ENCODE measurements at regions of chr9 and their contacts with region 1.

Region 1: DNA sequence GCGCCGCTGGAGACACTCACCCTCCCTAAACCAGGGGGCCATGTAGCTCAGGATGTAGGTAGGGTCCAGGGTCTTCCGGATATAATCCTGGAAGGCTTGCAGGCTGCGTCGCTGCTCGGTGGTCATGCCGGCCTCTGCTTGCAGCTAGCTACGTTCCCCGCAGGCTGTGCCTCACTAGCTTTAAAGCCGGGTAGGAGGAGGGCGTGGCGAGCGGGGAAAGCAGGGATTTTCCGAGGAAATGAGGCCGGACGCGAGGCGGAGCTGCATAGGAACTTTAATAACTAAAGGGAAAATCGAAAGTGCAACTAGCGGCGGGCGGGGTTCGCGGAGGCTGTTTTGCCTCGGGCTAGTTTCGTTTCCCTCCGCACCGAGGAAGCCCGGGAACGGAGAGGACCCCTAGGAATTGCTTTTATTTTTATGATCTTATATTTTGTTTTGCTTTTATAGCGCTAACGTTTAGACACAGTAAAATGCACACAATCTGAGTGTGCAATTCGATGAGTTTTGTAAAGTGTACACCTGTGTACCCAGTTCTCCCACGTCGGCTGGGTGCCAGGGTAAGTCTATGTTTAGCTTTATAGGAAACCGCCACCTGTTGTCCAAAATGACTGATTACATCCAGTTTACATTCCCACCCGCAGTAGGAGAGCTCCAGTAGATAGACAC is at the start of gene RIGI:
- DNase-seq: peak; percentile 74 to 88 (median 85)
- H3K4me3 ChIP-seq: peak within 1 kb of the TSS; percentile 51 to 95 (median 78)
- H3K27ac ChIP-seq: peak within 1 kb of the TSS; percentile 29 to 95 (median 87)
- H3K27me3 ChIP-seq: no peaks in the 10 kb centered on the region
- CTCF ChIP-seq: peak in 53 of 56 donors; percentile 7 to 73 (median 45)
- total RNA-seq, gene RIGI: 4.1 to 28.6 (median 7.2) TPM

Region 2: DNA sequence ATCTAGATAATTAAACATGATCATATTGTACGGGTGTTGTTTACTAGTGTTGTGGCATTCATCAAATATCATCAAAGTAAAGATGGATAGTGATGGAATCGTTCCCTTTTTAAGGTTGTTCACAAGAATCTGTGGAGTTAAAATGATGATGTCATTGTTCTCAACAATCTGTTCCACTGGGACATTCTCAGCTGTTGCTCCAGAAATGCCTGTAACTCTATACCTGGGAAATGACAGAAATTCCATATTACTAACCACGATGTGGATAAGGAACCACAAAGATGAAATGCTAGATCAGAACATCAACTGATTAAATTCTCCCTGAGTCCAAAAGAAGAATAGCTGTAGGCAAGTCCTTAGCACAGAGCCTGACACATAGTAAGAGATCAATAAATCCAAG is 38.2 kb before region 1 on chr9:
- intact Hi-C with region 1: no loop called
- DNase-seq: no peak
- H3K4me3 ChIP-seq: no peak overlapping the region
- H3K27ac ChIP-seq: no peak overlapping the region
- H3K27me3 ChIP-seq: no peaks in the 10 kb centered on the region
- CTCF ChIP-seq: no peak

Region 3: GRCh38 chr9:32550562-32551433 is 24.6 kb after region 1 on chr9:
- intact Hi-C with region 1: loop called (anchors 2 kb)
- DNase-seq: peak; percentile 90 to 96 (median 94)
- H3K4me3 ChIP-seq: peak overlapping the region; percentile 58 to 99 (median 89)
- H3K27ac ChIP-seq: peak overlapping the region; percentile 84 to 100 (median 98)
- H3K27me3 ChIP-seq: no peaks in the 10 kb centered on the region
- CTCF ChIP-seq: peak in 35 of 56 donors; percentile 5 to 54 (median 30)